A549 (cell line): ENCODE measurements at regions of chr6 and their contacts with region 1.

Region 1: DNA sequence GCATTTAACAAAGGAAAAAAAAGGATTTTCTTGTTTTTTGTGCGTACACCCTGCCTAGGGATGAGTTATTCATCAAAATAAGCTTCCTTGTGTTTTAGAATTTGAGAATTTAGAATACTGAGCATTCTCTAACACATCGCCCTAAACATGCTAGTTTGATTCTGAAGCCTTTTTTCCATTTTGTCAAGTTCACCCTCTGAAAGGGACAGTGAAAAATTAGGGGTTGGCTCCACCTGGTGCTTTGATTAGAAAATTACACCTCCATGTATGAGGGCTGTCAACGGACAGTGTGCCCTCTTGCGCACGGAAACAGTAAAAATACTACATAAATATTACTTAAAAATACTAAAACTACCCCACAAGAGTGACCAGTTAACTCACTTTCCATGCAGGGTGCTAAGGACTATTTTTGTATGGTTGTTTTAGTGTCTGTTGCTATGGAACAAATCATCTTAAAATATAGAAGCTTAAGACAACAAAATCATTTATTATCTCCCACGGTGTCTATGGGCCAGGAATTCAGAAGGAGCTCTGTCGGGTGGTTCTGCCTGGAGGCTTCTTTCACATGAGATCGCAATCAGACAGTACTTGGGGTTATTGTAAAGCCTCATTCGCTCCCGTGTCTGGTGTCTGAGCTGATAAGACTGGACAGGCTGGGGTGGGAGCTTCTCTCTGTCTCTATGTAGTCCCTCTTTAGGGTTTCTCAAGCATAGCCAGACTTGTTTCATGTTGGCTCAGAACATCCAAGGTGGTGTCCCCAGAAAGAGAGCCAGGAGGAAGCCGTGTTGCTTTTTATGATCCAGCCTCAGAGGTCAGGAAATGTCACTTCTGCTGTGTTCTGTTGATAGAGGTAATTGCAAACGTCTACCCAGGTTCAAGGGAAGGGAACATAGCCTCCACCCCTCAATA is 41.1 kb upstream of the TMEM170B start:
- DNase-seq: peak; percentile 50 to 83
- ATAC-seq: peak; percentile 72 to 90; a peak in 5 of 6 replicates
- H3K4me3 ChIP-seq: no peak overlapping the region
- H3K27ac ChIP-seq: peak overlapping the region; percentile 77 to 87
- H3K4me1 ChIP-seq: peaks cover 26% of the 10 kb centered on the region
- CTCF ChIP-seq: peak; percentile 95
- EP300 ChIP-seq: no peak
- POLR2A ChIP-seq: no peak
- RAD21 ChIP-seq: peak; percentile 98

Region 2: DNA sequence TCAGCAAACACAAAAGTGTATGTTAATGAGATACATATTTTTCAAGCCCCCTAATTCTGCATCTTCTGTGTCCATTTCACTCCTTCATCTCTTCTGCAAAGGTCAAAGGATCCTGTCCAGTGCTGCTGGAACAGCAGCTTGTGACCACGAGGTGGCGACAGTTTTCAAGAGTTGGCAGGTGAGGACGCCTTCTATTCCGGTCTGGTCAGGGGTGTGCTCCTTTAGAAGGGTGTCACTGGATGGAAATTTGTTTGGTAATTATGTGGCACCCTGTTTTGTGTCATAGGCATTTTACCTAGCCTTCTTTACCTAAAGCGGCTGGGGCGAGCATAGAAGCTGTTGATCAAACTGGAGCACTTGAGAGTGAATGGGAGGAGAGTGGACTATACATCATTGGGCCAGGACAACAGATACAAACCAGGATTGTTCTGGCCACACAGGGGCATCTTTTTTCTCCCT is 352.0 kb before region 1 on chr6:
- CTCF ChIA-PET with region 1: interaction called, 53 read pairs
- POLR2A ChIA-PET with region 1: no interaction called
- DNase-seq: peak; percentile 73 to 88
- ATAC-seq: peak; percentile 89 to 93
- H3K4me3 ChIP-seq: no peak overlapping the region
- H3K27ac ChIP-seq: peak overlapping the region; percentile 89 to 94
- H3K4me1 ChIP-seq: peaks cover 29% of the 10 kb centered on the region
- CTCF ChIP-seq: peak; percentile 83
- EP300 ChIP-seq: no peak
- POLR2A ChIP-seq: no peak
- RAD21 ChIP-seq: peak; percentile 93 to 94

Region 3: GRCh38 chr6:11179419-11180202 is 316.8 kb before region 1 on chr6:
- CTCF ChIA-PET with region 1: interaction called, 20 read pairs
- POLR2A ChIA-PET with region 1: no interaction called
- DNase-seq: no peak
- ATAC-seq: peak in 1 of 2 experiments; percentile 58; a peak in 3 of 6 replicates
- H3K4me3 ChIP-seq: no peak overlapping the region
- H3K27ac ChIP-seq: peak overlapping the region; percentile 60 to 75
- H3K4me1 ChIP-seq: peaks cover 10% of the 10 kb centered on the region
- CTCF ChIP-seq: no peak
- EP300 ChIP-seq: no peak
- POLR2A ChIP-seq: no peak
- RAD21 ChIP-seq: no peak

Region 4: GRCh38 chr6:11224252-11224965 is 272.0 kb before region 1 on chr6:
- CTCF ChIA-PET with region 1: interaction called, 16 read pairs
- POLR2A ChIA-PET with region 1: no interaction called
- DNase-seq: no peak
- ATAC-seq: peak in 1 of 2 experiments; percentile 5; a peak in 2 of 6 replicates
- H3K4me3 ChIP-seq: 0 out of 3 replicates have a peak overlapping the region, but pooled peaks have one; percentile 5
- H3K27ac ChIP-seq: peak overlapping the region; percentile 93 to 94
- H3K4me1 ChIP-seq: peaks cover 91% of the 10 kb centered on the region
- CTCF ChIP-seq: no peak
- EP300 ChIP-seq: no peak
- POLR2A ChIP-seq: no peak
- RAD21 ChIP-seq: no peak

Region 5: GRCh38 chr6:11317885-11318771 is 178.3 kb before region 1 on chr6:
- CTCF ChIA-PET with region 1: interaction called, 16 read pairs
- POLR2A ChIA-PET with region 1: no interaction called
- DNase-seq: peak; percentile 85 to 96
- ATAC-seq: peak; percentile 83 to 91
- H3K4me3 ChIP-seq: no peak overlapping the region
- H3K27ac ChIP-seq: peak overlapping the region; percentile 96
- H3K4me1 ChIP-seq: peaks cover 61% of the 10 kb centered on the region
- CTCF ChIP-seq: no peak
- EP300 ChIP-seq: peak; percentile 87 to 88; a peak in 4 of 5 replicates
- POLR2A ChIP-seq: no peak
- RAD21 ChIP-seq: peak; percentile 26 to 51; a peak in 3 of 5 replicates

Region 6: DNA sequence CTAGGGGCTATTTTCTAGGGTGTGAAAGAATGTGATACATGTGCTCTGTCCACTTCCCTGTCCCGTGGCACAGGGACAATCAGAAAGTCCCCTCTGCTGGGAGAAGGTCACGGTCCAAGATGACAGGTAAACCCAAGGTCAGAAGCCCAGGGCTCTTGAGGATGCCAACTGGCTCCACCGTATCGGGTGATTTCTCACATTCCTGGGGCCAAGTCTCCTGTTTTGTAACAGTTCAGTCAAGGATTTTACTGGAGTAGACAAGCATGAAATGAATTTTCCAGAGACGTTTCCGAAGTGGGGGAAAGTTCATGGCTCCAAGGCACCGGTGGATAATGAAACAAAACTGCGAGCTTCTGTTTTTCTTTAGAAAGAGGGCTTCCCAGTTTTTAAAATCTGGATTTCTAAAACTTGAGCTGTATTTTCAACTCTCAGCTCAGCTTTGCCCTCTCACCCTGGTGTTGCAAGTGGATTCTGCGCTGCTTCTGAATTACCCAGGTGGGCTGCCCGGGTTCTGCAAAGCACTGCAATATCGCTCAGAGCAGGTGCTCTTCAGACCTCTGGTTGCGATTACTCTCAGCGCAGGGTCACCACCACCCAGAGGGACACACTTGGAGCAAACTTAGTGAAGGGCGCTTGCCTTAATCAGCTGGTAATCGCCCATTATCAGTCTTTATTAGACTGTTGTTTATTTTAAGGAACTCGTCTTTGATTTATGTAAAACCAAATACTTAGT is 23.2 kb before region 1 on chr6:
- CTCF ChIA-PET with region 1: interaction called, 11 read pairs
- POLR2A ChIA-PET with region 1: no interaction called
- DNase-seq: no peak
- ATAC-seq: no peak
- H3K4me3 ChIP-seq: no peak overlapping the region
- H3K27ac ChIP-seq: no peak overlapping the region
- H3K4me1 ChIP-seq: no peaks in the 10 kb centered on the region
- CTCF ChIP-seq: no peak
- EP300 ChIP-seq: no peak
- POLR2A ChIP-seq: no peak
- RAD21 ChIP-seq: no peak

Region 7: DNA sequence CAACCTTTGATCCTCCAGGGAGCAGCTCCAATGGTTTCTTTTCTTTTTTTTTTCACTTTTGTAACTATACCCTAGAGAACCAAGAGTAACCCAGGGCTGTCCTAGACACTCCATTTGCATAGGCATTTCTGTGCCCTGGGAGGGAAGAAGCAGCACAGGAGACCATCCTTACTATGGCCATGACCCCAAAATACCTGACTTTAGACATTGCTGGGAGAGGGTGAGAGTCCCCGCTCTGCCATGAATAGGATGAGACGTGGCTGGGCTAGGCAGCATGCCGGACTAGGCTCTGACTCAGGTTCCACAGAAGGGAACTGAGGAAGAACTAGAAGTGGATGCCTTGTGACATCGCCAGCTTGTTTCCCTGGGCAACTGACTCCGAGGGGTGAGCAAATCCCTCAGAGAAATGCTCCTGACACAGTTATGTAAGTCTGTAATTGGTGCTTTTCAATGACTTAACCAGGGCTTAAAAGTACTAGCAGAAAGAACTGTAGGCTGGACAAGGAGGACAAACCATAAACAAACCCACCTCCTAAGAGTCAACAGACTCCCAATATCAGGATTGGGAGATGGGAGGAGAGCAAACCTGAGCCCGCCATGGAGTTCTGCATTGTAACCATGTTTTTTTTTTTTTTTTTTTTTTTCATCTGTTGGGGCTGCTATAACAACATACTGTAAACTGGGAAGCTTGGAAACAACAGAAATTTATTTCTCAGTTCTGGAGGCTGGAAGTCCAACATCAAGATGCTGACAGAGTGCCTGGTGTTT is 283.1 kb after region 1 on chr6:
- CTCF ChIA-PET with region 1: no interaction called
- POLR2A ChIA-PET with region 1: no interaction called
- DNase-seq: no peak
- ATAC-seq: no peak
- H3K4me3 ChIP-seq: no peak overlapping the region
- H3K27ac ChIP-seq: peak overlapping the region in 1 of 2 experiments; percentile 28; a peak in 2 of 6 replicates
- H3K4me1 ChIP-seq: peaks cover 10% of the 10 kb centered on the region; the same call in 2 of the 3 replicates
- CTCF ChIP-seq: no peak
- EP300 ChIP-seq: no peak
- POLR2A ChIP-seq: no peak
- RAD21 ChIP-seq: no peak